ENCODE measurements at regions of chr11 and their contacts with region 1.

Region 1: DNA sequence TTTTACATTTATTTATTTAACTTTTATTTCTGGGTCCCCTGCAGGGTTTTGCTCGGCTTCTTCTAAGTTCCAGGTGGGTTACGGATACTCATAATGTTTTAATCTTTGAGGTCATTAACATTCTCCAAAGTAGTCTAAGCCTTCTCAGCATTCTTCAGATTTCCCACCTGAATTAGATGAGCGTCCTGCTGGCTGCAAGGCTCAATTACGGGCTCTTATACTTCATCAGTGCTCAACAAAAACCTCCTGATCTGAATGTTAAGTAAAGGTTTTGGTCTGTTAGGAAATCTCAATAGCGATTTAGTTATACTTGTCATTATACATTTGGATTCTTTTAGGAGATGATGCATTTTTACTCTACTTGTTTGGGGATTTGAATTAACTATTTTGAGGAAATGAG is 27.3 kb upstream of the NFRKB start:
- DNase-seq: no peak
- H3K4me3 Mint-ChIP-seq: no peak overlapping the region
- H3K27ac Mint-ChIP-seq: no peak overlapping the region
- H3K4me1 Mint-ChIP-seq: peaks cover 8% of the 10 kb centered on the region
- H3K27me3 Mint-ChIP-seq: no peaks in the 10 kb centered on the region
- CTCF ChIP-seq: no peak

Region 2: DNA sequence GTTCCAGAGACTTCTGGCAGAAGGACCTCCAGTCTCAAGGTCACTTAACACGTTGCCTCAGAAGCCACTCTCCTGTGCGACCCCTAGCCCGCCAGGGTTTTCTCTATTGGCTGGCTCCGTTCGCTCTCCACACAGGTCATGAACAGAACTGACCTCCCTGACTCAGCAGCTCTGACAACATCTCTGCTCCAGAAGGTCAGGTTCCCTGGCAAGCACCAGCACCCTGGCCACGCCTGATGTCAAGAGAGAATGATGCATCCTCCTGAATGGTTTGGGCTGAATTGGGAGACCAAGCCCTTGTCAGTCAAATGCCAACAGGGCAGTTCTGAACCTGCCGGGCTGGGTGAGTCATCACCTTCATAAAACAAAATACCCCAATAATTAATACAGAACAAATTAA is 191.3 kb before region 1 on chr11:
- CTCF ChIA-PET with region 1: no interaction called
- intact Hi-C with region 1: no loop called
- DNase-seq: no peak
- H3K4me3 Mint-ChIP-seq: no peak overlapping the region
- H3K27ac Mint-ChIP-seq: no peak overlapping the region
- H3K4me1 Mint-ChIP-seq: peaks cover 48% of the 10 kb centered on the region
- H3K27me3 Mint-ChIP-seq: peaks cover 3% of the 10 kb centered on the region
- CTCF ChIP-seq: no peak

Region 3: GRCh38 chr11:130131961-130132850 is 209.5 kb after region 1 on chr11:
- CTCF ChIA-PET with region 1: interaction called, 21 read pairs
- intact Hi-C with region 1: loop called (anchors 1 kb)
- DNase-seq: peak; percentile 48
- H3K4me3 Mint-ChIP-seq: no peak overlapping the region
- H3K27ac Mint-ChIP-seq: no peak overlapping the region
- H3K4me1 Mint-ChIP-seq: no peaks in the 10 kb centered on the region
- H3K27me3 Mint-ChIP-seq: no peaks in the 10 kb centered on the region
- CTCF ChIP-seq: peak; percentile 50

Measured in Calu3 (cell line).